Activated CD4-positive, alpha-beta T cell treated with anti-CD3 and anti-CD28 coated beads for 36 hours (primary cell): ENCODE measurements at regions of chr2 and their contacts with region 1.

Region 1: GRCh38 chr2:38274286-38275276 is 102.5 kb downstream of the ATL2 start:
- DNase-seq: peak; percentile 42
- ATAC-seq: no peak
- H3K4me3 Mint-ChIP-seq: no peak overlapping the region
- H3K27ac Mint-ChIP-seq: no peak overlapping the region
- H3K4me1 Mint-ChIP-seq: peaks cover 3% of the 10 kb centered on the region
- H3K27me3 Mint-ChIP-seq: no peaks in the 10 kb centered on the region

Region 2: DNA sequence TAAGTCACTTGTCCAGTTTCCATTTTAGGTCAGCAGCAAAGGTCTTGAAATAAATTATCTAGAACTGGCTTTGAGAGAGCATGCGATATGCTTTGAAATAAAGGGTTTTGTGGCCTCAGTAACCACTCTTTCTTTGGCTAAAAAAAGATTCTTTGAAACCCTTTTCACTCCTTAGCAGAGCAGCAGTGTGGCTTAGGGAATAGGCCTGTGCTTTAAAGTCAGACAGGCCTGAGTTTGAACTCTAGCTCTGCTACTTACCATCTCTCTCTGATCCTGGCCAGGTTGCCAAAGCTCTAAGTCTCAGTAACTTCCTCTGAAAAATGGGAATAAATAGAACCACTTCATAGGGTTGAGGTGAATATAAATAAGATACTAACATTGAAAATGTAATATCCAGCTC is 877.4 kb before region 1 on chr2:
- CTCF ChIA-PET with region 1: interaction called, 3 read pairs
- POLR2A ChIA-PET with region 1: no interaction called
- intact Hi-C with region 1: loop called in 1 of 2 experiments (anchors 2 kb)
- DNase-seq: no peak
- ATAC-seq: no peak
- H3K4me3 Mint-ChIP-seq: no peak overlapping the region
- H3K27ac Mint-ChIP-seq: no peak overlapping the region
- H3K4me1 Mint-ChIP-seq: no peaks in the 10 kb centered on the region
- H3K27me3 Mint-ChIP-seq: peaks cover 5% of the 10 kb centered on the region

Region 3: GRCh38 chr2:37890893-37891495 is 383.6 kb before region 1 on chr2:
- CTCF ChIA-PET with region 1: no interaction called
- POLR2A ChIA-PET with region 1: no interaction called
- intact Hi-C with region 1: loop called (anchors 1 to 5 kb)
- DNase-seq: peak; percentile 83
- ATAC-seq: peak; percentile 43
- H3K4me3 Mint-ChIP-seq: no peak overlapping the region
- H3K27ac Mint-ChIP-seq: no peak overlapping the region
- H3K4me1 Mint-ChIP-seq: peaks cover 46% of the 10 kb centered on the region
- H3K27me3 Mint-ChIP-seq: peaks cover 8% of the 10 kb centered on the region

Region 4: DNA sequence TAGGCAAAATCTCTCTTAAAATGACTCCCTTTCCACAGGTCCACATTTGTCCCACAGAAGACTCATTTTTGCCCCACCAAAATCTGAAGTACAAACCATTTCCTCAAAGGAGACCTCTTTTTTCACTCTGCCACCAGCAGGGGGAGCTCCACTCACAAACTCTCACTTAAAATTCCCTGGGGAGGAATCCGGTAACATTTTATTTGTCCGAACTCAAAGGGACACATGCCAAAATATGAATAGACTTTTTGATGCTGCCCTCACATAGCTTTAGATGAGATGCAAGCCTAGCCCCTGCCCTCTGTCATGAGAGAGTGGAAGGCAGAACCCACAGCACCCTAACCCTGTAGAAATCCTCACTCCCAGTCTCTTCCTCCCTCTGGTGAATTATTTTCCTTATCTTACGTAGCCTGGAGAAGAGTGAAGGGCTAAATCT is 292.4 kb before region 1 on chr2:
- CTCF ChIA-PET with region 1: interaction called, 4 read pairs
- POLR2A ChIA-PET with region 1: no interaction called
- intact Hi-C with region 1: loop called (anchors 1 to 2 kb)
- DNase-seq: peak; percentile 74
- ATAC-seq: no peak
- H3K4me3 Mint-ChIP-seq: no peak overlapping the region
- H3K27ac Mint-ChIP-seq: no peak overlapping the region
- H3K4me1 Mint-ChIP-seq: peaks cover 4% of the 10 kb centered on the region
- H3K27me3 Mint-ChIP-seq: peaks cover 3% of the 10 kb centered on the region